Panc1 (cell line): ENCODE measurements at regions of chr1 and their contacts with region 1.

Region 1: DNA sequence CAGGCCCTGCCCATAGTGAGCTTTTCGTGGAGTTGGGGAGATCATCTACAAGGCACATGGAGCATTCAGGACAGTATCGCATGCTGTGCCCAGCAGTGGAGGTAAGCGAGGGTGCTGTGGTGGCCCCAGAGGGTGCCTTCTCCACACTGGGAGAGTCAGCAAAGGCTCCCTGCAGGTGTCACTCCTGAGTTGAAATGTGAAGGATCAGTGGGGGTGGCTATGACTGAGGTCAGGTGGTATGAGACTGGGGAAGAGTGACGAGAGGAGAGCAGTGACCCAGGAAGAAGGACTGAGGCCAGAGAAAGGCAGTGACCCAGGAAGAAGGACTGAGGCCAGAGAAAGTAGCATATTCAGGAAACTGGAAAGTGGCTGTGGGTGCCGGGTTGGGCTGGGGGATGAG is 53.0 kb downstream of the SPAG17 start:
- DNase-seq: no peak
- ATAC-seq: no peak
- H3K4me3 ChIP-seq: no peak overlapping the region
- H3K27ac ChIP-seq: no peak overlapping the region
- H3K4me1 ChIP-seq: no peaks in the 10 kb centered on the region
- H3K27me3 ChIP-seq: no peaks in the 10 kb centered on the region
- CTCF ChIP-seq: no peak

Region 2: GRCh38 chr1:118113261-118113660 is 18.7 kb before region 1 on chr1:
- CTCF ChIA-PET with region 1: interaction called, 10 read pairs
- POLR2A ChIA-PET with region 1: no interaction called
- in situ Hi-C with region 1: no loop called
- intact Hi-C with region 1: no loop called
- DNase-seq: no peak
- ATAC-seq: no peak
- H3K4me3 ChIP-seq: no peak overlapping the region
- H3K27ac ChIP-seq: no peak overlapping the region
- H3K4me1 ChIP-seq: no peaks in the 10 kb centered on the region
- H3K27me3 ChIP-seq: no peaks in the 10 kb centered on the region
- CTCF ChIP-seq: no peak

Region 3: DNA sequence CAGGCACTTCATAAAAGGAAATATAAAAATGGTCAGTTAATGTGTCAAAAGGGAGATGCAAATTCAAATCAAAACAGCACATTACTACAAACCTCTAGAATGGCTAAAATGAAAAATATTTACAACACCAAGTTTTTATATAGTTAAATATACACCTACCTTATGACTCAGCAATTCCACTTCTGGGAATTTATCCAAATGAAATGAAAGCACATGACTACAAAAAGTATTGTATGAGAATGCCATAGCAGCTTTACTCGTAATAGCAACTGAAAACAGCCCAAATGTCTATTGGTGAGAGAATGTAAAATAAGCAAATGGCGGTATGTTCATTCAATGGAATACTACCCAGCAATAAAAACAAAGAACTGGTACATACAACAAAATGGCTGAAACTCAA is 228.8 kb after region 1 on chr1:
- CTCF ChIA-PET with region 1: no interaction called
- POLR2A ChIA-PET with region 1: no interaction called
- in situ Hi-C with region 1: no loop called
- intact Hi-C with region 1: no loop called
- DNase-seq: no peak
- ATAC-seq: no peak
- H3K4me3 ChIP-seq: no peak overlapping the region
- H3K27ac ChIP-seq: no peak overlapping the region
- H3K4me1 ChIP-seq: no peaks in the 10 kb centered on the region
- H3K27me3 ChIP-seq: no peaks in the 10 kb centered on the region
- CTCF ChIP-seq: no peak